ENCODE measurements at regions of chr2 and their contacts with region 1.

Region 1: DNA sequence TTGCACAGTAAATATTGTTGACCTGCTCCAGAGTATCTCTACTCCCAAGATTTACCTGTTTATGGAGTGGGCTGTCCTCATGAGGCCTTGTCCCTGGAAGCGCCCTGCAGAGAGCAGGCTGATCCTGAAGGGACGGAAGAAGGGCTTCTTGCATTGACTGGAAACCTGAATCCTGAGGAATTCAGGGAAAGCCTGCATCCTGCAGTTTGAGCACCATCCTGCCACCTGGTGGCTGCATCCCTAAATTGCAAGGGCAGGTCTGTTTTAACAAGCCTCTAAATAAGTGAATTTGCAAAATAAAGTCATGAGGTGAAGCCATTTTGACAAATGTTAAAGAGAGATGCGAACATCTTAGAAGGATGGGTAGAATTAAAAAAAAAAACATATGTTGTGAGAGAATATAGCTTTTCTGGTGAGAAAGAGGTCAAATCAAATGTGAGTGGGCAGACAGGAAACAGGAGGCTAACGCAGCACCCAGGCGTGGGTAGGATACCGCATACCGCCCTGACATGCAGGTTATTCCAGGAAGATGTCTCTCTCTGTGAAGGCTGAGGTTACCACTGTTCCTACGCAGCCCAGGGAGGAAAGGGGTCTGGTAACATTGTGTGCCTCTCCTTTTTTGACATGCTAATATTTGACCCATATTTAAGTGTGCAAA is 754.9 kb downstream of the RNF144A start:
- DNase-seq: peak; percentile 76
- H3K4me3 ChIP-seq: no peak overlapping the region
- H3K27ac ChIP-seq: no peak overlapping the region
- H3K4me1 ChIP-seq: no peaks in the 10 kb centered on the region
- H3K27me3 ChIP-seq: no peaks in the 10 kb centered on the region
- CTCF ChIP-seq: peak; percentile 66

Region 2: DNA sequence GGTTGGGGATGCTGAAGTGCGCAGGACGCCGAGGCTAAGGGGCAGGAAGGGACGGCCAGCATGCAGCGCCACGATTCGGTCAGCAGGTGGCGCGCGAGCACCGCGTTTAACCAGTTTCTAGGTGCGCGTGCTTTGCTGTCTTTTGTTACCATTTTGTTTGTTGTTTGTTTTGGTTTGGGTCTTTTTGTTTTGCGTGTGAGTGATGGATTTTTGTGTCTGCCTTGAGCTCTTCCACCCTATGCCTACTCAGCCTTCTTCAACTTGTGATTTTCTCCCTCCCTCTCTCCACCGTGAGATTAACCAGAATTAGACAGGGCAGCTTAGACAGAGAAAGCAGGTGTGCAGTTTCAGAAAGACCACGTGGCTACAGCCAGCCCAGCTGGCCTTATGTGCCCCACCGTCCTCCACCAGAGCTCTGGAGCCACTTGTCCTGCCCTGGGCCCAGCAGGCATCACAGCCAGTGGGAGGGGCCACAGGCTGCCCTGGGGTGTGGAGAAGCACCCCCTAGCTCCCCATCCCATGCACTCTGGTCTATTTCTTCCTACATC is 574.7 kb before region 1 on chr2:
- intact Hi-C with region 1: loop called (anchors 10 kb)
- DNase-seq: peak; percentile 73
- H3K4me3 ChIP-seq: no peak overlapping the region
- H3K27ac ChIP-seq: no peak overlapping the region
- H3K4me1 ChIP-seq: no peaks in the 10 kb centered on the region
- H3K27me3 ChIP-seq: no peaks in the 10 kb centered on the region
- CTCF ChIP-seq: peak; percentile 100

Measured in colonic mucosa (tissue), 4 donors.